Naive thymus-derived CD4-positive, alpha-beta T cell (primary cell): ENCODE measurements at regions of chr1 and their contacts with region 1.

Region 1: GRCh38 chr1:1206376-1207260 is at the start of gene TNFRSF18:
- DNase-seq: peak in 2 of 9 donors; percentile 20 to 68
- ATAC-seq: no peak
- H3K4me3 ChIP-seq: peak within 1 kb of the TSS; percentile 6
- H3K4me3 Mint-ChIP-seq: peak within 1 kb of the TSS in 7 of 10 donors; percentile 25 to 83 (median 45)
- H3K27ac ChIP-seq: no peak within 1 kb of the TSS
- H3K27ac Mint-ChIP-seq: peak within 1 kb of the TSS in 2 of 9 donors; percentile 38 to 96
- H3K4me1 ChIP-seq: peaks cover 13 to 16% of the 10 kb centered on the region in 2 donors
- H3K4me1 Mint-ChIP-seq: peaks cover 6 to 29% (median 14%) of the 10 kb centered on the region in 7 donors
- H3K27me3 ChIP-seq: no peaks in the 10 kb centered on the region
- H3K27me3 Mint-ChIP-seq: no peaks in the 10 kb centered on the region
- total RNA-seq, gene TNFRSF18: 2.6 to 81.7 (median 12.6) TPM in 3 of 5 experiments, not detected in the others

Region 2: GRCh38 chr1:1137256-1138045 is 69.2 kb before region 1 on chr1:
- CTCF ChIA-PET with region 1: no interaction called
- POLR2A ChIA-PET with region 1: no interaction called
- intact Hi-C with region 1: loop called in 1 of 2 experiments (anchors 5 kb)
- DNase-seq: peak; percentile 28 to 85 (median 52)
- ATAC-seq: peak; percentile 92
- H3K4me3 ChIP-seq: peak overlapping the region; percentile 24
- H3K4me3 Mint-ChIP-seq: peak overlapping the region; percentile 46 to 90 (median 80)
- H3K27ac ChIP-seq: no peak overlapping the region
- H3K27ac Mint-ChIP-seq: peak overlapping the region in 8 of 9 donors; percentile 52 to 92 (median 76)
- H3K4me1 ChIP-seq: peaks cover 5 to 9% of the 10 kb centered on the region in 2 donors
- H3K4me1 Mint-ChIP-seq: peaks cover 0 to 23% (median 9%) of the 10 kb centered on the region in 7 donors
- H3K27me3 ChIP-seq: no peaks in the 10 kb centered on the region
- H3K27me3 Mint-ChIP-seq: no peaks in the 10 kb centered on the region

Region 3: GRCh38 chr1:1173793-1174415 is 32.7 kb before region 1 on chr1 and contains the start of gene TTLL10:
- CTCF ChIA-PET with region 1: no interaction called
- POLR2A ChIA-PET with region 1: no interaction called
- intact Hi-C with region 1: loop called in 1 of 2 experiments (anchors 5 kb)
- DNase-seq: peak in 7 of 9 donors; percentile 31 to 70 (median 54)
- ATAC-seq: peak; percentile 70
- H3K4me3 ChIP-seq: peak within 1 kb of the TSS; percentile 24
- H3K4me3 Mint-ChIP-seq: peak within 1 kb of the TSS in 7 of 10 donors; percentile 6 to 58 (median 33)
- H3K27ac ChIP-seq: no peak within 1 kb of the TSS
- H3K27ac Mint-ChIP-seq: peak within 1 kb of the TSS in 1 of 9 donors; percentile 49
- H3K4me1 ChIP-seq: peaks cover 6 to 18% of the 10 kb centered on the region in 2 donors
- H3K4me1 Mint-ChIP-seq: peaks cover 7 to 25% (median 9%) of the 10 kb centered on the region in 7 donors
- H3K27me3 ChIP-seq: no peaks in the 10 kb centered on the region
- H3K27me3 Mint-ChIP-seq: peaks cover 4 to 23% (median 4%) of the 10 kb centered on the region in 5 donors
- total RNA-seq, gene TTLL10: 0.58 to 0.80 TPM in 2 of 5 experiments, not detected in the others

Region 4: GRCh38 chr1:1280782-1281481 is 74.3 kb after region 1 on chr1:
- CTCF ChIA-PET with region 1: no interaction called
- POLR2A ChIA-PET with region 1: no interaction called
- intact Hi-C with region 1: no loop called
- DNase-seq: no peak
- ATAC-seq: no peak
- H3K4me3 ChIP-seq: no peak overlapping the region
- H3K4me3 Mint-ChIP-seq: no peak overlapping the region
- H3K27ac ChIP-seq: no peak overlapping the region
- H3K27ac Mint-ChIP-seq: no peak overlapping the region
- H3K4me1 ChIP-seq: no peaks in the 10 kb centered on the region
- H3K4me1 Mint-ChIP-seq: peaks cover 0 to 1% (median 0%) of the 10 kb centered on the region in 7 donors
- H3K27me3 ChIP-seq: no peaks in the 10 kb centered on the region
- H3K27me3 Mint-ChIP-seq: no peaks in the 10 kb centered on the region